Sigmoid colon (tissue), 7 donors: ENCODE measurements at regions of chr13 and their contacts with region 1.

Region 1: DNA sequence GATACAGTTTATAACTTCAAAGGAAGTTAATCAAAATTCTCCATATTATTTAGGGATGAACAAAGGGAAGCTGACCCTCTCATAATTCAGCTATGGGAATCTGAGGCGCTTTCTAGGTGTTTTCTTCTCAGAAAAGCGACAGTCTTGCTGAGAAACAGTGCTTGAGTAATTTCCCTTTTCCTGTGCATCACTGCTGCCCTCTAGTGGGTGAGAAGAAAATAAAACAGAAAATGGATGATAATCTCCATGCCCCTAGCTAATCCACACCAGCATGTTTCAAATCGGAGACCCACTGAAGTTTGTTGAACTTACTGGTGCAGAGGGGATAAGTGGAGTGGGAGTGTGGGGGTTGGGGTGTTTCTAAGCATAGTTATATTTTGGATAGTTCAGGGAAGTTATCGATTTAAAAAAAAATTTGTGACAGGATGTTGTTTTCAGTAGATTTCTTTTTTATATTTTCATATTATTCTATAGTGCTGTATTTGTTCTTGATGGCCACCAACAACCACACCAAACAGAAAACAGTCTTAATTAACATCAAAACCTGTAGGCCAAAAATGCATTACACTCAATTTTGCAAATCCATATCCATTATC is 21.4 kb downstream of the LCP1 start:
- DNase-seq: no peak
- H3K4me3 ChIP-seq: no peak overlapping the region
- H3K27ac ChIP-seq: no peak overlapping the region
- H3K4me1 ChIP-seq: no peaks in the 10 kb centered on the region
- H3K27me3 ChIP-seq: no peaks in the 10 kb centered on the region
- CTCF ChIP-seq: peak; percentile 19 to 70 (median 44)
- EP300 ChIP-seq: no peak
- POLR2A ChIP-seq: no peak

Region 2: DNA sequence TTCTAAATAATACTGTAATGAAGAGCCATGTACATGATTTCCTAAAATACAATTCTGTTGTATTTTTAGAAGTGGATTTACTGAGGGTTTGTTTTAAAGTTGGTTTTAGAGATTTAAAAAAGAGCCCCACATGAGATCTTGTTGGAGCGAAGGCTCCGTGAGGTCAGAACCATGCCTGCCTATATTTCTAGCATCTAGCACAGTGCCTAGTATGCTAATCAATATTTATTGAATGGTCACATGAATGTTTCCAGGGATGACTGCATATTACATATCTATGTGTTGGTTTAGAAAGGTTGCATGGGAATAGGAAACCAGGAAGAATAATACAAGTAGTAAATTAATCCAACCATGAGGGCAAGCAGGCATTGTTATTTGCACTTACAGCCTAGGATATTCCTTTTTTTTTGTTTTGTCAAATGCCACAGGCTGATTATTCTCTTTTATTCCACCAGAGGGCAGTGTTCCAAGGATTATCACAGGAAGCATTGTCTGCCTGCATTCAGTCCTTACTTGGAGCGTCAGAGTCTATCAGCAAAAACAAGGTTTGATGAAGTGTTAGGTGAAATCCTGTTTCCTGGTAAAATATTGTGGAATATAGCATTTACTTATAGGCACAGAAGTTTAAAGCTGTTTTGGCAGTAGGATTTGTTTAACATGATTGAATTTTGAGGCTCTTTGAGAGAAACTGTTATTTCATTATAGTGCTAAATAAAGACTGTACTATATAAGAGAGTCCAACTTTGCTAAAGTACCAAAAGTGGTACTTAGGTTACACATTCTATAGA is 649.1 kb before region 1 on chr13:
- intact Hi-C with region 1: loop called (anchors 5 kb)
- DNase-seq: no peak
- H3K4me3 ChIP-seq: no peak overlapping the region
- H3K27ac ChIP-seq: peak overlapping the region in 1 of 4 donors; percentile 31
- H3K4me1 ChIP-seq: no peaks in the 10 kb centered on the region
- H3K27me3 ChIP-seq: no peaks in the 10 kb centered on the region
- CTCF ChIP-seq: peak; percentile 53 to 93 (median 81)
- EP300 ChIP-seq: no peak
- POLR2A ChIP-seq: no peak

Region 3: GRCh38 chr13:45989607-45990006 is 171.0 kb before region 1 on chr13:
- intact Hi-C with region 1: no loop called
- DNase-seq: no peak
- H3K4me3 ChIP-seq: no peak overlapping the region
- H3K27ac ChIP-seq: no peak overlapping the region
- H3K4me1 ChIP-seq: no peaks in the 10 kb centered on the region
- H3K27me3 ChIP-seq: no peaks in the 10 kb centered on the region
- CTCF ChIP-seq: no peak
- EP300 ChIP-seq: no peak
- POLR2A ChIP-seq: no peak